ENCODE measurements at regions of chr10 and their contacts with region 1.

Region 1: GRCh38 chr10:123043409-123043925 is 34.7 kb downstream of the ACADSB start:
- DNase-seq: peak; percentile 82
- H3K27ac ChIP-seq: no peak overlapping the region
- CTCF ChIP-seq: peak; percentile 80

Region 2: DNA sequence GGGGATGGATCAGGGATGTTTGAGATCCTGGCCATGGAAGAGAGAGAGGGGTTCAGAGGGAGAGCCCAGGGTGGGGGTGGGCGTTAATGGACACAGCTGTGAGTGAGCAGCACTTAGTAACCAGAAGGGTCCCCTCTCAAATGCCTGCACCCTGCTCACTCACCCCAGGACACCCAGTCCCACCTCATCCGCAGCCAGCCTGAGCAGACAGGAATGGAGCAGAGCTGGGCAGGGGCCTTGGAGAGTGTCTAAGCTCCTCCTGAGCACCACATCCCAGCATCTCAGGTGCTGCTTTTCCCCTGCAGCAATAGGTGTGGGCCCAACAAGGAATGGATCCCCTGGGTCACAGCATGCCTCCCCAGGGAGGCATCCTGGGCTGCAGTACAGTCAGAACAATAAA is 127.8 kb before region 1 on chr10:
- CTCF ChIA-PET with region 1: no interaction called
- POLR2A ChIA-PET with region 1: no interaction called
- DNase-seq: no peak
- H3K27ac ChIP-seq: no peak overlapping the region
- CTCF ChIP-seq: no peak

Region 3: GRCh38 chr10:123132576-123133477 is 89.4 kb after region 1 on chr10:
- CTCF ChIA-PET with region 1: interaction called, 14 read pairs
- POLR2A ChIA-PET with region 1: no interaction called
- DNase-seq: peak; percentile 90
- H3K27ac ChIP-seq: no peak overlapping the region
- CTCF ChIP-seq: peak; percentile 83

Region 4: GRCh38 chr10:123139521-123140163 is 96.2 kb after region 1 on chr10:
- CTCF ChIA-PET with region 1: interaction called, 14 read pairs
- POLR2A ChIA-PET with region 1: no interaction called
- DNase-seq: no peak
- H3K27ac ChIP-seq: no peak overlapping the region
- CTCF ChIP-seq: no peak

Region 5: DNA sequence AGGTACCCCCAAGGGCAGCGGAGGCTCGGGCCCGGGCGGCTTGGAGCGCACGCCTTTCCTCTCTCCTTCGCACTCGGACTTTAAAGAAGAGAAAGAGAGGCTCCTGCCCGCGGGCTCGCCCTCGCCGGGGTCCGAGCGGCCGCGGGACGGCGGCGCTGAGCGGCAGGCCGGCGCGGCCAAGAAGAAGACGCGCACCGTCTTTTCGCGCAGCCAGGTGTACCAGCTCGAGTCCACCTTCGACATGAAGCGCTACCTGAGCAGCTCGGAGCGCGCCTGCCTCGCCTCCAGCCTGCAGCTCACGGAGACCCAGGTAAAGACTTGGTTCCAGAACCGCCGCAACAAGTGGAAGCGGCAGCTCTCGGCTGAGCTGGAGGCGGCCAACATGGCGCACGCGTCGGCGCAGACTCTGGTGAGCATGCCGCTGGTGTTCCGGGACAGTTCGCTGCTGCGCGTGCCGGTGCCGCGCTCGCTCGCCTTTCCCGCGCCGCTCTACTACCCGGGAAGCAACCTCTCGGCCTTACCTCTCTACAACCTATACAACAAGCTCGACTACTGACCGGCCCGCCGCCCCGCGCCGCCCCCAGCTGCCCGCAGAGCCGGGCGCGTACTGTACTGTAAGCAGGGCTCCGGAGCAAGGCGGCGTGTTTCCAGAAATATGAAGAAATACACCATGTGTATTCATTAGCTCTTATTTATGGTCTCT is 106.3 kb after region 1 on chr10:
- CTCF ChIA-PET with region 1: interaction called, 13 read pairs
- POLR2A ChIA-PET with region 1: no interaction called
- DNase-seq: no peak
- H3K27ac ChIP-seq: no peak overlapping the region
- CTCF ChIP-seq: no peak

Region 6: GRCh38 chr10:123380497-123381085 is 337.1 kb after region 1 on chr10:
- CTCF ChIA-PET with region 1: interaction called, 44 read pairs
- POLR2A ChIA-PET with region 1: no interaction called
- DNase-seq: peak; percentile 32
- H3K27ac ChIP-seq: no peak overlapping the region
- CTCF ChIP-seq: no peak

Region 7: GRCh38 chr10:123559066-123559822 is 515.8 kb after region 1 on chr10:
- CTCF ChIA-PET with region 1: interaction called, 24 read pairs
- POLR2A ChIA-PET with region 1: no interaction called
- DNase-seq: peak; percentile 84
- H3K27ac ChIP-seq: no peak overlapping the region
- CTCF ChIP-seq: peak; percentile 84

Measured in RWPE1 (cell line).